HEK293 (cell line): ENCODE measurements at regions of chr1 and their contacts with region 1.

Region 1: GRCh38 chr1:103525607-103526507 is at the start of gene RNPC3:
- H3K4me3 ChIP-seq: peak within 1 kb of the TSS; percentile 95
- H3K27ac ChIP-seq: peak within 1 kb of the TSS; percentile 84
- H3K4me1 ChIP-seq: no peaks in the 10 kb centered on the region
- CTCF ChIP-seq: peak; percentile 32; the same call in 1 of the 2 replicates

Region 2: DNA sequence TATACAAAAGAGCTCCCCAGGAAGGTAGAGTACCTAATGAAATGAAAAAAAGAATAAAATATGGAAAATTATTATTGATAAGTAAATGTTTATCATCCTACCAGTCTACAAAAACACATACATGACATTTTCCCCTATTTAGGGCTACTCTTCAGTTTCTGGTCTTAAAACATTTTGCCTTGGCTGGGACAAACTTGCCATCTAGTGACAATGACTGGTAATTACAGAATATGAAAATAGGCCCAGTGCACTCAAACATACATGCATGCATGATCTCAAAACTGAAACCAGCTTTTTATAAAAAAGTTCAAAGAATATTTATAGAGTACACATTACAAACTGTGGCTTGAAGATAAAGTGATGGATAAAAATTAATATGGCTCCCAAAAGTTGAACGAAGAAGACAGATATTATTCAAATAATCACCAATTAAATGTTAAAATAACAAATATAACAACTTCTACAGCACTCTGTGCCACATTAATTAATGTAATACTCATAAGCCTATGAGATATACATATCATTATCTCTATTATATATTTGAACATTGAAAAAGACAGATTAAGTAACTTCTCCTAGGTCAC is 10.8 kb before region 1 on chr1:
- CTCF ChIA-PET with region 1: interaction called, 11 read pairs
- POLR2A ChIA-PET with region 1: no interaction called
- H3K4me3 ChIP-seq: no peak overlapping the region
- H3K27ac ChIP-seq: no peak overlapping the region
- H3K4me1 ChIP-seq: no peaks in the 10 kb centered on the region
- CTCF ChIP-seq: 0 out of 2 replicates have a peak, but pooled peaks have one; percentile 12

Region 3: DNA sequence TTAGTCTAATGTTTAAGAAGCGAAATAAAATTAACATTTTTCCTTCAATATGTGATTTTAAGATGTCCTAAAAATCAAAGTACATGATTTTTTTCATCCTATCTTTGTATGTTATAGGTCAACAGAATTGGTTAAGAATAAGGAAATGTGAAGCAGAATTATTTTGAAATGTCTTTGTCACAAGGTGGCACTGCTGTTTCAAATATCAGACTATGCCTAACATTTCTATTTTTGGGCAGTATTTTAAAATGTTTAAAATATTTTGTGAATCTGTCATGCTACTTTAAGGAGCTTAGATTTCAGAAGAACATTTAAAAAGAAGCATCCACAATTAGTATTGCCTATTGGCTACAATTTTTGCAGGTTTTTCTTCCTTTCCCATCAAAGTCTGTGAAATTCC is 262.5 kb after region 1 on chr1:
- CTCF ChIA-PET with region 1: no interaction called
- POLR2A ChIA-PET with region 1: no interaction called
- H3K4me3 ChIP-seq: no peak overlapping the region
- H3K27ac ChIP-seq: no peak overlapping the region
- H3K4me1 ChIP-seq: no peaks in the 10 kb centered on the region
- CTCF ChIP-seq: no peak